HEK293T (cell line): ENCODE measurements at regions of chr6 and their contacts with region 1.

Region 1: GRCh38 chr6:150865406-150866146 is at the start of gene MTHFD1L:
- DNase-seq: peak; percentile 91

Region 2: DNA sequence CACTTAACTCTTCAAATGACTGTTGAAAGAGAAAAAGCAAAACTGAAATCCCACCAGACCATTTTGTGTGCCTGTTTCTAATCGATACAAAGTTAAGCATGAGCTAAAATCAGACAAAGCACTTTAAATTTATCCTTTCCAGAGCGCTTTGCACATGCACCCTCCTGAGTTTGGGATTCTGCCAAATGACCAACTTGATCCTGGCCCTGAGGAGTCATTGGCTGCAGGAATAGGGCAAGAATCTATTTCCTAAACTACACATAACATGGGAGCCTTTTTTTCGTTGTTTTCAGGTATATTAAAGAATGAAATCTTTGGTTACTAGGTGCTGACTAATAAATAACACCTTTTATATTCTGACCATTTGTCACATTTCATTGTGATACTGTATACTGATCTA is 23.9 kb before region 1 on chr6:
- CTCF ChIA-PET with region 1: no interaction called
- POLR2A ChIA-PET with region 1: no interaction called
- DNase-seq: no peak

Region 3: GRCh38 chr6:150881911-150882481 is 16.4 kb after region 1 on chr6:
- CTCF ChIA-PET with region 1: no interaction called
- POLR2A ChIA-PET with region 1: interaction called, 13 read pairs
- DNase-seq: no peak